Activated naive CD4-positive, alpha-beta T cell treated with anti-CD3 and anti-CD28 coated beads for 36 hours (primary cell): ENCODE measurements at regions of chr3 and their contacts with region 1.

Region 1: DNA sequence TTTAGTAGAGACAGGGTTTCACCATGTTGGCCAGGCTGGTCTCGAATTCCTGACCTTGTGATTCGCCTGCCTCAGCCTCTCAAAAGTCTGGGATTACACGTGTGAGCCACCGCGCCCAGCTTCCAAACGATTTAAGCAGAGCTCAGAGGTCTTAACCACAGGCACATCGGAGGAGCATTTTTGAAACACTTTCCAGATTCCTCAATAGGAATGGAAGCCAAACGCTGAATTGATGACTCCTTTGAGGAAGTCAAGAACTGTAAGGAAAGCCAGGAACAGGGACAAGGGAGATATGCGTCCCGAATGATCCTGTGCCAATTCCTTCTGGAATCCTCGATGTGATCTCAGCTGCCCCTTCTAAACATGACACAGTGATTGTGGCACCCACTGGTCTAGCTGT is 40.0 kb downstream of the TRH start:
- DNase-seq: no peak
- H3K4me3 Mint-ChIP-seq: no peak overlapping the region
- H3K27ac Mint-ChIP-seq: no peak overlapping the region
- H3K4me1 Mint-ChIP-seq: no peaks in the 10 kb centered on the region
- H3K27me3 Mint-ChIP-seq: no peaks in the 10 kb centered on the region

Region 2: DNA sequence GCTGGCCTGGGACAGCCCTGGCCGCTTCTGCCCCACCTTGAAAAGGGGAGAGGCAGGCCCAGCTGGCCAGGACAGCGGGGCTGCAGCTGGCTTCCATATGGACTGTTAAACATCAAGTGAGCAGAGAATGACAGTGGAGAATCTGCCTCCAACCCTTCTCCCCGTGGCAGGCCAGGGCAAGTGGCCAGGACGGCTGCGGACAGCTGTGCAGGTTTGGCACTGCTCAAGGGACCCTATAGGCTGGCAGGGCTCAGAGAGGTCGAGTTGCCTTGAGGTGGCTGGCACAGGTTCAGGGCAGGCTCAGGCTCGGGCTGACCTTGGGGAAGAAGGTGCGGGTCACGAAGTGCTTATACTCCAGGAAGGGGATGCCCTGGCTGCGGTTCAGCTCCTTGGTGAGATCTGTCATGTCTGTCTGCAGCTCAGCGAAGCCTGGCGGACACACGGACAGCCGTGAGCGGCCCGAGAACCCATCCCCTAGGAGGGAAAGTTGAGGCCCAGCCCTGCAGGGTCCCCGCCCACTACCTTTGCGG is 447.3 kb before region 1 on chr3:
- CTCF ChIA-PET with region 1: no interaction called
- intact Hi-C with region 1: no loop called
- DNase-seq: no peak
- H3K4me3 Mint-ChIP-seq: no peak overlapping the region
- H3K27ac Mint-ChIP-seq: no peak overlapping the region
- H3K4me1 Mint-ChIP-seq: no peaks in the 10 kb centered on the region
- H3K27me3 Mint-ChIP-seq: no peaks in the 10 kb centered on the region

Region 3: GRCh38 chr3:129627429-129628168 is 386.9 kb before region 1 on chr3:
- CTCF ChIA-PET with region 1: no interaction called
- intact Hi-C with region 1: no loop called
- DNase-seq: peak; percentile 83
- H3K4me3 Mint-ChIP-seq: peak overlapping the region; percentile 92
- H3K27ac Mint-ChIP-seq: peak overlapping the region; percentile 65
- H3K4me1 Mint-ChIP-seq: peaks cover 10% of the 10 kb centered on the region
- H3K27me3 Mint-ChIP-seq: no peaks in the 10 kb centered on the region

Region 4: DNA sequence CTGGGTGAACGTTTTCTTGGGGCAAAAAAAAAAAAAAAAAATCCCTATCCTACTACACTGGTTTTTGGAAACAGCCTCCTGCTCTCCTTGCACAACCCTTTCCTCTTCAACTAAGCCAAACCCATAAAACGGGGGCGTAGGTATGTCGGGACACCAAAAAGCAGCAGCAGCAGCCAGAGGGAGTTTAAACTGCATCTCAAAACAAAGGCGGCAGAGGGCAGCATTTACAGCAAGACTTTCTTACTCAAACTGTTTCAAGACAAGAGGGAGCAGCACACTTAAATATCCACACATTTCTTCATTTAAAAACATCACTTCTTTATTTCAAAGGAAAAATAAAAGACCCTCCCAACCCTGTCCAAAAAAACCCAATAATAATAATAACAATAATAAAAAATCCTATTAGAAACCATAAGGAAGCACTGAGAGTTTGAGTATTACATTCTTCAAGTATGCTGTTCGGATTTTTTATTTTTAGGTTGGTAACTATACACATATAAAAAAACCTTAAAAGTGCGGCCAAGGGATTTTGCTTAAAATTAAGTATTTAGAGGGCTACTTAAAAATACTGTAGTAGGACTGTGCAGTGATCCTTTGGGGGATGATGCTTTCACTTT is 364.2 kb before region 1 on chr3:
- CTCF ChIA-PET with region 1: no interaction called
- intact Hi-C with region 1: loop called (anchors 10 kb)
- DNase-seq: peak; percentile 83
- H3K4me3 Mint-ChIP-seq: no peak overlapping the region
- H3K27ac Mint-ChIP-seq: no peak overlapping the region
- H3K4me1 Mint-ChIP-seq: peaks cover 1% of the 10 kb centered on the region
- H3K27me3 Mint-ChIP-seq: no peaks in the 10 kb centered on the region